Pancreas (tissue), 10 donors: ENCODE measurements at regions of chr9 and their contacts with region 1.

Region 1: DNA sequence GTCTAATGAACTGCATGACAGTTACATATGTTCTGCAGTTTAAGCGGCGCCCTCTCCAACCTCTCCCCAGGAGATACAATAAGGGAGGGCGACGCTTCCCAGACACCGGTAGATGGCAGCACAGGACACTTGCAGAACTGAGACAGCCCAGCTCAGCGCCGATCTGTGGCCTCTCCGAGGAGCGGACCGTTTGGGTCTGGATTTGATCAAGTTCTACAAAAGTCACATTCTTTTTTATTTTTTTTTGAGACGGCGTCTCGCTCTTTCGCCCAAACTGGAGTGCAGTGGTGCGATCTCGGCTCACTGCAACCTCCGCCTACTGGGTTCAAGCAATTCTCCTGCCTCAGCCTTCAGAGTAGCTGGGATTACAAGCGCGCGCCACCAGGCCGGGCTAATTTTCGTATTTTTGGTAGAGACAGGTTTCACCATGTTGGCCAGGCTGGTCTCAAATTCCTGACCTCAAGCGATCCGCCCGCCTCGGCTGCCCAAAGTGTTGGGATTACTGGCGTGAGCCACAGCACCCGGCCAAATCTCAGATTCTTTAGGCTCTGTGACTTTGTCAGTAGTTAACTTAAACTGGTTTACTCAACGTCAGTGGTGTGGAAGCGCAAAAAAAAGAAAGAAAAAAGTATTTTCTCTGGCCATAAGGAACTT is 1.4 kb upstream of the ATOSB start:
- DNase-seq: peak; percentile 83 to 94 (median 90)
- ATAC-seq: peak; percentile 79 to 88 (median 83)
- H3K4me3 ChIP-seq: peak overlapping the region in 3 of 4 donors; percentile 22 to 51 (median 49)
- H3K27ac ChIP-seq: peak overlapping the region; percentile 47 to 71 (median 60)
- H3K4me1 ChIP-seq: peaks cover 0 to 19% (median 9%) of the 10 kb centered on the region in 3 donors
- H3K27me3 ChIP-seq: no peaks in the 10 kb centered on the region
- CTCF ChIP-seq: peak; percentile 87 to 94 (median 90)

Region 2: GRCh38 chr9:35260186-35260585 is 143.2 kb after region 1 on chr9:
- intact Hi-C with region 1: loop called in 2 of 3 experiments (anchors 5 kb)
- DNase-seq: no peak
- ATAC-seq: no peak
- H3K4me3 ChIP-seq: no peak overlapping the region
- H3K27ac ChIP-seq: no peak overlapping the region
- H3K4me1 ChIP-seq: peaks cover 11 to 33% (median 25%) of the 10 kb centered on the region in 3 donors
- H3K27me3 ChIP-seq: no peaks in the 10 kb centered on the region
- CTCF ChIP-seq: no peak

Region 3: GRCh38 chr9:35267710-35268109 is 150.7 kb after region 1 on chr9:
- intact Hi-C with region 1: loop called in 2 of 3 experiments (anchors 5 kb)
- DNase-seq: no peak
- ATAC-seq: no peak
- H3K4me3 ChIP-seq: no peak overlapping the region
- H3K27ac ChIP-seq: no peak overlapping the region
- H3K4me1 ChIP-seq: no peaks in the 10 kb centered on the region
- H3K27me3 ChIP-seq: no peaks in the 10 kb centered on the region
- CTCF ChIP-seq: no peak